ENCODE measurements at regions of chr19 and their contacts with region 1.

Region 1: GRCh38 chr19:9309139-9309973 is at the start of gene ZNF699:
- DNase-seq: peak; percentile 99 to 100 (median 99)
- ATAC-seq: peak; percentile 98 to 99 (median 98)
- H3K4me3 ChIP-seq: peak within 1 kb of the TSS; percentile 50 to 99 (median 96)
- H3K27ac ChIP-seq: peak within 1 kb of the TSS; percentile 89 to 99 (median 96)
- H3K4me1 ChIP-seq: peaks cover 0 to 24% (median 11%) of the 10 kb centered on the region in 12 donors
- H3K27me3 ChIP-seq: no peaks in the 10 kb centered on the region
- CTCF ChIP-seq: no peak
- POLR2A ChIP-seq: peak in 1 of 2 donors; percentile 83
- total RNA-seq, gene ZNF699: 2.7 to 6.3 (median 4.1) TPM

Region 2: GRCh38 chr19:9140159-9140874 is 169.0 kb before region 1 on chr19 and contains the start of gene ZNF317:
- intact Hi-C with region 1: loop called in 1 of 10 experiments (anchors 10 kb)
- DNase-seq: peak; percentile 92 to 96 (median 94)
- ATAC-seq: peak; percentile 93 to 99 (median 98)
- H3K4me3 ChIP-seq: peak within 1 kb of the TSS; percentile 62 to 96 (median 80)
- H3K27ac ChIP-seq: peak within 1 kb of the TSS; percentile 54 to 94 (median 84)
- H3K4me1 ChIP-seq: peaks cover 0 to 27% (median 15%) of the 10 kb centered on the region in 12 donors
- H3K27me3 ChIP-seq: no peaks in the 10 kb centered on the region
- CTCF ChIP-seq: peak in 1 of 12 donors; percentile 17
- POLR2A ChIP-seq: peak in 1 of 2 donors; percentile 70
- total RNA-seq, gene ZNF317: 8.4 to 21.6 (median 13.5) TPM

Region 3: DNA sequence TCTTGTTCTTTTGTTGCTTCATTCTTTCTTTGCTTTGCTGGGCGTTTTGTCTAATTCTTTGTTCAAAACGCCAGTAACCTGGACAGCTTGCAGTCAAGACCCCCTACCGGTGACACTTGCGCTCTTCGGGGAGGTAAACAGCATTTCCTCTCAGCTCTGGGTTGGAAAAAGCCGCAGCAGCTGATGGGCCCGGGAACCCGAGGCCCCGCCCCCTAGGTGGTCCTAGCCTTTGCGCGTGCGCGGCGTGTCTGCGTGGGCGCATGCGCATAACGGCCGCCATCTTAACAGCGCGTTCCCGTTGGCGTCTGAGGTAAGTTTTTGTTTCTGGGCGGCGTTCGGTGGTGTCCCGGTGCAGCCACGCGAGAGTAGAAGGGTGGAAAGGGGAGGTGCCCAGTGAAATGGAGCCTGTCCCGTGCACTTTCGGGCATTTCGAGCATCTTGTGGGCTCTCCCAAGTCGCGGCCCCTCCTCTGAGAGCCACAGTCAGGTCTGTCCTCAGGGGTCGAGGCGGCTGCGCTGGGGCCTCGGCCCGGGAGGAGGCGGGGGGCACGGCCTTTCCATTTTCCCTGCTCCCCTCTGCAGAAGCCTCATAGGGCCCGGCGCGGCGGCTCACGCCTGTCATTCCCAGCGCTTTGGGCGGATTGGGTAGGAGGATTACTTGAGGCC is 14.7 kb after region 1 on chr19 and contains the start of gene ZNF559:
- intact Hi-C with region 1: loop called in 2 of 10 experiments (anchors 1 kb)
- DNase-seq: peak; percentile 93 to 97 (median 94)
- ATAC-seq: peak; percentile 97 to 99 (median 98)
- H3K4me3 ChIP-seq: peak within 1 kb of the TSS; percentile 51 to 96 (median 72)
- H3K27ac ChIP-seq: peak within 1 kb of the TSS; percentile 69 to 93 (median 88)
- H3K4me1 ChIP-seq: peaks cover 0 to 17% (median 6%) of the 10 kb centered on the region in 12 donors
- H3K27me3 ChIP-seq: no peaks in the 10 kb centered on the region
- CTCF ChIP-seq: peak in 8 of 12 donors; percentile 4 to 44 (median 29)
- POLR2A ChIP-seq: peak in 1 of 2 donors; percentile 67
- total RNA-seq, gene ZNF559: 12.3 to 19.1 (median 15.1) TPM

Region 4: GRCh38 chr19:9354651-9355050 is 45.3 kb after region 1 on chr19:
- intact Hi-C with region 1: no loop called
- DNase-seq: no peak
- ATAC-seq: no peak
- H3K4me3 ChIP-seq: no peak overlapping the region
- H3K27ac ChIP-seq: no peak overlapping the region
- H3K4me1 ChIP-seq: no peaks in the 10 kb centered on the region
- H3K27me3 ChIP-seq: no peaks in the 10 kb centered on the region
- CTCF ChIP-seq: no peak
- POLR2A ChIP-seq: no peak

Region 5: GRCh38 chr19:9538183-9539058 is 229.1 kb after region 1 on chr19 and contains the start of gene ZNF426:
- intact Hi-C with region 1: loop called in 3 of 10 experiments (anchors 5 to 10 kb)
- DNase-seq: peak; percentile 89 to 93 (median 91)
- ATAC-seq: peak; percentile 94 to 99 (median 98)
- H3K4me3 ChIP-seq: peak within 1 kb of the TSS; percentile 45 to 99 (median 76)
- H3K27ac ChIP-seq: peak within 1 kb of the TSS; percentile 87 to 97 (median 96)
- H3K4me1 ChIP-seq: peaks cover 0 to 18% (median 12%) of the 10 kb centered on the region in 12 donors
- H3K27me3 ChIP-seq: no peaks in the 10 kb centered on the region
- CTCF ChIP-seq: peak in 1 of 12 donors; percentile 8
- POLR2A ChIP-seq: peak in 1 of 2 donors; percentile 39
- total RNA-seq, gene ZNF426: 10.1 to 21.9 (median 14.3) TPM

Region 6: GRCh38 chr19:9584073-9584833 is 274.9 kb after region 1 on chr19 and contains the start of gene ZNF121:
- intact Hi-C with region 1: loop called in 5 of 10 experiments (anchors 5 to 10 kb)
- DNase-seq: peak; percentile 87 to 92 (median 90)
- ATAC-seq: peak; percentile 93 to 98 (median 97)
- H3K4me3 ChIP-seq: peak within 1 kb of the TSS; percentile 53 to 98 (median 87)
- H3K27ac ChIP-seq: peak within 1 kb of the TSS; percentile 69 to 95 (median 91)
- H3K4me1 ChIP-seq: peaks cover 0 to 30% (median 19%) of the 10 kb centered on the region in 12 donors
- H3K27me3 ChIP-seq: peaks cover 0 to 14% (median 0%) of the 10 kb centered on the region in 9 donors
- CTCF ChIP-seq: peak in 2 of 12 donors; percentile 10 to 13
- POLR2A ChIP-seq: peak in 1 of 2 donors; percentile 38
- total RNA-seq, gene ZNF121: 15.6 to 25.4 (median 19.1) TPM

Region 7: DNA sequence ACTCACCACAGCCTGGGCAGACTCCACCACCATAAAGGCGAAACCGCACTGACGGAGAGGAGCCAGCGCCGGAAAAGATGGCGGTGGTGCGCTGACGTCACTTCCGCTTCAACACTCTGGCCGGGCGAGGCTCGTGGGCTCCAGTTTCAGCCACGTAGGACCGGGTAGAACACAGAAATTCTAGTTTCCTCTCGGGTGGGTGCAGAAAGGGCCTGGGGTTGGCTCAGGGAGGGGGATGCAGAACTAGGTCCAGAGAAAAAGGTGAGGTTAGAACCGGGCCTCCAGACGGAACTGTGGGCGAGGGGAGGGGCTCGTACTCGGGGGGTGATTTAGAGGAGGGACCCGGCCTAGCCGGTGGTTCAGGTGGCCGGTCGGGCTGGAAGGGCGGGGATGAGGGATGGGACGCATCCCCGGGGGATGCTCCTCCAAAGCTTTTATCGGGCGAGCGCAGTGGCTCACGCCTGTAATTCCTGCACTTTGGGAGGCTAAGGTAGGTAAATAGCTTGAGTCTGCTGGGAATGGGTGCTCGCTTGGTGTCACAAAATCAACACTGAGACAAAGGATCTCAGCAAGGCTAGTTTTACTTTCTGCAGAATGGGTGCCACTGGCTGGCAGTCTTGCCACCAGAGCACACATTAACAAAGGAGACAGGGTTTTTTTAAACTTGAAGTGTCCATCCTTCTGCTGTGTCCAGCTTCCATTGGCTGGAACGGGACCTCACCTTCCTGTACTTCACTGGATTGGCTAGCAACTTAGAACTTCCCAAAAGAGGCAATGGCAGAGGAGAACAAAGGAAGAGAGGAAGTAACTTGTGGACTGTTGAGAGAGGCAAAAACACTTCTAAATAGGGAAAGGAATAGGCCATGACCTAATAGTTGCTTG is 312.0 kb after region 1 on chr19 and contains the start of gene ZNF561:
- intact Hi-C with region 1: loop called in 2 of 10 experiments (anchors 2 to 5 kb)
- DNase-seq: peak; percentile 85 to 93 (median 90)
- ATAC-seq: peak; percentile 93 to 96 (median 95)
- H3K4me3 ChIP-seq: peak within 1 kb of the TSS; percentile 60 to 97 (median 76)
- H3K27ac ChIP-seq: peak within 1 kb of the TSS; percentile 79 to 97 (median 93)
- H3K4me1 ChIP-seq: peaks cover 4 to 30% (median 18%) of the 10 kb centered on the region in 12 donors
- H3K27me3 ChIP-seq: no peaks in the 10 kb centered on the region
- CTCF ChIP-seq: no peak
- POLR2A ChIP-seq: no peak
- total RNA-seq, gene ZNF561: 12.2 to 30.0 (median 20.8) TPM

Region 8: DNA sequence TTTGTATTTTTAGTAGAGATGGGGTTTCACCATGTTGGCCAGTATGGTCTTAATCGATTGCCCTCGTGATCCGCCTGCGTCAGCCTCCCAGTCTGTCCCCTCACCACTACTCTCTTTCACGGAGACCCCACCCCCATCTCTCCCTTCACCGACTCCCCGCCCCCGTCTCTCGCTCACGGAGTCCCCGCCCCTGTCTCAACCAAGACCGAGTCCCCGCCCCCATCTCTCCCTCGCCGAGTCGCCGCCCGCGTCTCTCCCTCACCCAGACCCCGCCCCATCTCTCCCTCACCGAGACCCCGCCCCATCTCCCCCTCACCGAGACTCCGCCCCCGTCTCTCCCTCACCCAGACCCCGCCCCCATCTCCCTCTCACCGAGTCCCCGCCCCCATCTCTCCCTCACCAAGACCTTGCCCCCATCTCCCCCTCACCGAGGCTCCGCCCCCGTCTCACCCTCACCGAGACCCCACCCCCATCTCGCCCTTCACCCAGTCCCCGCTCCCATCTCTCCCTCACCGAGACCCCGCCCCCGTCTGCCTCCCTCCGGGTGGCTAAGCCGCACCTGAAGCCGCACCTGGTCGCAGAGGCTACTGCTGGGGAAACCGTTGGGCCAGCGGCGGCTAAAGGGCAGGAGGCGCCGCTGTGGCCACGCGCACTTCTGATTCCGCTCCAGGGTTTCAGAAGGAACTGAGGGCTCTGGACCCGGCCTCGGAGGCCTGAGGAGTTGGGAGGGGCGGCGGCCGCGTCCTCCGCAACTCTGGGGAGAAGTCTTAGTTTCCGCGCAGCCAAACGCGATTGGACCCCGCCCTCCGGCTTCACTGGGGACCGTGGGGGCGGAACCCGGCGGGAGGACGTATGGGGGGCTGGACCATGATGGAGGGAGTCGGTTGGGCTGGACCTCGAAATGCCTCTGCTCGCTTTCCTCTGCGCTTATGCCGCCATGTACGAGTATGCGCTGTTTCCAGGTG is 476.3 kb after region 1 on chr19:
- intact Hi-C with region 1: loop called in 7 of 10 experiments (anchors 5 to 10 kb)
- DNase-seq: peak; percentile 98 to 99 (median 98)
- ATAC-seq: peak; percentile 92 to 96 (median 94)
- H3K4me3 ChIP-seq: peak overlapping the region; percentile 42 to 92 (median 66)
- H3K27ac ChIP-seq: peak overlapping the region; percentile 52 to 100 (median 96)
- H3K4me1 ChIP-seq: peaks cover 0 to 26% (median 11%) of the 10 kb centered on the region in 12 donors
- H3K27me3 ChIP-seq: no peaks in the 10 kb centered on the region
- CTCF ChIP-seq: no peak
- POLR2A ChIP-seq: peak in 1 of 2 donors; percentile 87